CD4-positive, alpha-beta T cell (primary cell): ENCODE measurements at regions of chr5 and their contacts with region 1.

Region 1: GRCh38 chr5:66987949-66988838 is 208.4 kb downstream of the CD180 start:
- DNase-seq: peak in 3 of 14 experiments; percentile 45 to 53 (median 50)
- ATAC-seq: peak; percentile 73
- H3K4me3 ChIP-seq: no peak overlapping the region
- H3K4me3 Mint-ChIP-seq: no peak overlapping the region
- H3K27ac ChIP-seq: no peak overlapping the region
- H3K27ac Mint-ChIP-seq: no peak overlapping the region
- H3K4me1 ChIP-seq: no peaks in the 10 kb centered on the region
- H3K4me1 Mint-ChIP-seq: peaks cover 5% of the 10 kb centered on the region
- H3K27me3 ChIP-seq: no peaks in the 10 kb centered on the region
- H3K27me3 Mint-ChIP-seq: no peaks in the 10 kb centered on the region
- CTCF ChIP-seq: peak; percentile 94

Region 2: GRCh38 chr5:67094476-67095300 is 106.5 kb after region 1 on chr5:
- CTCF ChIA-PET with region 1: no interaction called
- POLR2A ChIA-PET with region 1: no interaction called
- intact Hi-C with region 1: loop called in 1 of 2 experiments (anchors 5 kb)
- DNase-seq: no peak
- ATAC-seq: no peak
- H3K4me3 ChIP-seq: no peak overlapping the region
- H3K4me3 Mint-ChIP-seq: no peak overlapping the region
- H3K27ac ChIP-seq: no peak overlapping the region
- H3K27ac Mint-ChIP-seq: no peak overlapping the region
- H3K4me1 ChIP-seq: no peaks in the 10 kb centered on the region
- H3K4me1 Mint-ChIP-seq: peaks cover 4% of the 10 kb centered on the region
- H3K27me3 ChIP-seq: no peaks in the 10 kb centered on the region
- H3K27me3 Mint-ChIP-seq: no peaks in the 10 kb centered on the region
- CTCF ChIP-seq: no peak

Region 3: GRCh38 chr5:67149951-67150523 is 161.8 kb after region 1 on chr5:
- CTCF ChIA-PET with region 1: no interaction called
- POLR2A ChIA-PET with region 1: no interaction called
- intact Hi-C with region 1: loop called in 1 of 2 experiments (anchors 5 kb)
- DNase-seq: no peak
- ATAC-seq: no peak
- H3K4me3 ChIP-seq: no peak overlapping the region
- H3K4me3 Mint-ChIP-seq: no peak overlapping the region
- H3K27ac ChIP-seq: no peak overlapping the region
- H3K27ac Mint-ChIP-seq: no peak overlapping the region
- H3K4me1 ChIP-seq: no peaks in the 10 kb centered on the region
- H3K4me1 Mint-ChIP-seq: no peaks in the 10 kb centered on the region
- H3K27me3 ChIP-seq: no peaks in the 10 kb centered on the region
- H3K27me3 Mint-ChIP-seq: no peaks in the 10 kb centered on the region
- CTCF ChIP-seq: no peak